Head of caudate nucleus (tissue), 42 donors: ENCODE measurements at regions of chr17 and their contacts with region 1.

Region 1: DNA sequence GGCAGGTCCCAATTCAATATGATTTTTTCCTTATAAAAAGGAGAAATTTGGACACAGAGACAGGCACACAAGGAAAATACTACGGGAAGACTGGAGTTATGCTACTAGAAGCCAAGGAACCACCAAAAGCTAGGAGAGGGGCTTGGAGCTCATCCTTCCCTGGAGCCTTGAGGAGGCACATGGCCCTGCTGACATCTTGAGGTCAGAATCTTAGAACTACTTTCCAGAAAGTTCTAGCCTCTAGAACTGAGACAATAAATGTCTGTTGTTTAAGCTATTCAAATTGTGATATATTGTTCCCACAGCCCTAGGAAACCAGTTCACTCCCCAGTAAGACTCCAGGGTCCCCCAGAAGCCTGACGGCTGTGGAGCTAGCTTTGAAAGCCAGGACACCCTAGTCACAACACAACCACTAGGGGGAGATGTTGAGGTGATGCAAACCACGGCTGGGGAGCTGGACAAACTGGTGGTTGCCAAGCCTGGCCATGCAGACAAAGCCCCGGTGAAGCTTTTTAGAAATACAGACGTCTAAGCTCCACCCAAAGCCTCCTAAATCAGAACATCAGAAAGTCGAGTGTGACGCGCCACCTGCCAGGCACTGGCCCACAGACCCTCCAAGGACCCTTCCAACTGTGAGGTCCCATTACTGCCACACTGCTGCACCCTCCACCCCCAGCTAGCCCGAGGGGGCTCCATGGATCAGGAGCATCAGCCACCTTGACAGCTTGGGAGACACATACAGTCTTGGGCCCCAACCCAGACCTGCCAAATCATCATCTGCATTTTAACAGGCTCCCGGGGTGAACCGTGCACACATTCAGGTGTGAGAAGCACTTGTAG is 106.4 kb downstream of the SLC39A11 start:
- DNase-seq: peak; percentile 45 to 92 (median 74)

Region 2: DNA sequence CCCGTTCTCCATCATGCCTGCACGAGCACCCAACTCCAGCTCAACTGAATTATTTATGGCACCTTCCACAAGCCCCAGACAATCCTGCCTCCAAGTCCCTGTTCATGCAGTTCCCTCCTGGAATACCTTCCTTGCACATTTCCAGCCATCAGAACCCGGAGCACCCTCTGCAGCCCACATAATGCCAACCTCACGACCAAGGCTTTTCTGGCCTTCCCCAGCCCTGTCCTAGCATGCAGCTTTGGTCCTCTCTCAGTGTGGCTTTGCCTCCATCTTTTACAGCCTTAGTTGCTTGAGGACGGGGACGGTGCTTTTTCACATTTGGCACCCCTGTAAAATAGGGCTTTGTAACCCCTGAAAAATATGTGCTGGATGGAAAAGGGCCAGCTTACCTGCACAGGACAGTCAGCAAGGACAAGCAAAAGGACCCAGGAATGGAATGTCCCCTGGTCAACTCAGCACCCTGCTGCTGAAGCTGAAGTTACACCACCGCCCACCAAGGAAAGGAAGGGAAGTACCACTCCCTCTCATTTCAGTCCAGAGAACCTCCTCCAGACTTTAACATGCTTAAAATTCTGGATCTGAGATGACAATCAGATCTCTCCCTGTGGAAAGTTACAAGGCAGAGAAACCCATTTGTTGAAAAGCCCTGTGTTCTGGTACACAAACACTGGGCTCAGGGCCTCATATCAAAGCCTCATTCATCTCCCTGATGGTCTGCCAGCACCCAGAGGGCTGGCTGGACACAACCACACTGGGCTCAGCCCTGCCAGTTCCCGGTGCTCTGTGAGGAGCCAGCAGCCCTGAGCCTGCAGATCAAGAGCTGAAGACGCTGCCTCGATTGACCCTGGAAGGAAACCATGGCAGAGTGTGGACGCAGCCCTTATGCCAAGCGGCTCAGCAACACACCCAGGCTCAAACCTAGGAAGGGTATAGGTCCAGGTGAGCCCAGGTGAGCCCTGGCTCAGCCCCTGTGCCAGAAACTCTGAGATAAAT is 103.5 kb after region 1 on chr17:
- intact Hi-C with region 1: loop called (anchors 5 kb)
- DNase-seq: peak; percentile 65 to 96 (median 87)

Region 3: DNA sequence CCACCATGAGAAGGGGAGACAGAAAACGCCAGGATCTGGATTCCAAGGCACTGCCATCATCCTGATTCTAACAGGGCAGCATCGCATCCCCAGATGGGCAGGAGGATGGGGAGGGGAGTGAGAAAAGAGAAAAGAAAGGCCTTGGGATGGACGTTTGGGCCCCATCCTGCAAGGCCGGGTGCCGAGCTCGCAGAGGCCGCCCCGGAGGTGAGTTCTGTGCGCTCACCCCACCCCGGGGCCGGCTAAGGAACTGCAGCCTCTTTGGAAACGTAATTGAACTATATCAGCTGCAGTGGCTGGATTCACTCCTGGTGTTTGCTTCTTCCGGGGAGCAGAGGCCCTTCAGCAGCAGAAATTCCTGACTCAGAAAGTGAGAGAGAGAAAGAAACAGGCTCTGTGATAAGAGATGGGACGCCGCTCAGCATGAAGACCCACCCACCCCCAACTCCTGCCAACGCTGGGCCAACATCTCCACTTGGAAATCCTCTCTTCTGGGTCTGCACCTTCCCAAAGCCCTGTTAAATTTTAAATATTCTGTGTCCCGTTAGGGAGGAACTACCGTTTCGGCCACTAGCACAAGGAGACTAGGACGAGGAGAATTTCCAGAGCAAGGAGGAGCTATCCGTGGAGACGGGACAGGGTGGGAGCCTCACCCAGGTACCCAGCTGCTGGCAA is 170.2 kb after region 1 on chr17:
- intact Hi-C with region 1: loop called (anchors 5 kb)
- DNase-seq: peak; percentile 75 to 93 (median 82)